Transverse colon (tissue), 4 donors: ENCODE measurements at regions of chr12 and their contacts with region 1.

Region 1: GRCh38 chr12:41653386-41654326 is 465.5 kb downstream of the PDZRN4 start:
- DNase-seq: no peak
- H3K4me3 ChIP-seq: no peak overlapping the region
- H3K27ac ChIP-seq: no peak overlapping the region
- H3K4me1 ChIP-seq: no peaks in the 10 kb centered on the region
- H3K27me3 ChIP-seq: no peaks in the 10 kb centered on the region
- CTCF ChIP-seq: no peak
- EP300 ChIP-seq: no peak
- POLR2A ChIP-seq: no peak

Region 2: GRCh38 chr12:41709463-41710285 is 56.0 kb after region 1 on chr12:
- in situ Hi-C with region 1: loop called in 1 of 4 experiments (anchors 10 kb)
- intact Hi-C with region 1: no loop called
- DNase-seq: no peak
- H3K4me3 ChIP-seq: no peak overlapping the region
- H3K27ac ChIP-seq: no peak overlapping the region
- H3K4me1 ChIP-seq: no peaks in the 10 kb centered on the region
- H3K27me3 ChIP-seq: no peaks in the 10 kb centered on the region
- CTCF ChIP-seq: no peak
- EP300 ChIP-seq: no peak
- POLR2A ChIP-seq: no peak